GM18951 (cell line): ENCODE measurements at regions of chr12 and their contacts with region 1.

Region 1: DNA sequence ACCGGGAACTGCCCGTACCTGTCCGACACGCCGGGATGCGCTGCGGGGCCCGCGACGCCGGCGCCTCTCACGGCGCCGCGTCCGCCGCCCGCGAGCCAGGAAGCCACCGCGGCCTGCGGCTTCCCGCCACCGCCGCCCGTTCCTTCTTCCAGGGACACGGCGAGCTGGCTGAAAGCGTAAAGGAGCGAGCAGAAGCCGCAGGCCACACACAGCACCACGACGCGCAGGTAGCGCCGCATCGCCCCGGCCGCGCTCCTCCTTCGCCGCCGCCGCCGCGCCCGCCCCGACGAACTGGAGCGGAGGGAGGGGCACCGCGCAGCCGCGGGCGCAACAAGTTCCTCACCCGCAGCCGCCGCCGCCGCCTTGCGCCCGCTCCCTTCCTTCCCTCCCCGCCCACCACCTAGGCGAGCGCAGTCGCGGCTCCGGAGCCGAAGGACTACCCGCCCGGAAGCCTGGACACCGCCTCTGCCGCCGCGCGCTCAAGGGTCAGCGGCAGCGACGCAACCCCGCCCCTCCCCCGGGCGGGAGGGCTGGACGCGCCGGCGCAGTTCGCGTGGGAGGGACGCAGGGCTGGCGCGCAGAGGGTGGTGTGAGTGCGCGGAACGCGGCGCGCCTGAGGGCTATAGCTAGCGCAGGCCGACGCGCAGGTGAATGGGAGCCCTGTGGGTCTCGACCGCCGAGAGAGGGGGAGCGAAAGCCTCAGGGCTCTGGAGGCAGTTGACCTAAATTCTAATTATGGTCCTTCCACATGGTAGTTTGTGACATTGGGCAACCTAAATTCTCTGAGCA is at the start of gene GXYLT1:
- POLR2A ChIP-seq: peak; percentile 90

Region 2: GRCh38 chr12:41739066-41739465 is 405.5 kb before region 1 on chr12:
- in situ Hi-C with region 1: no loop called
- POLR2A ChIP-seq: no peak

Region 3: DNA sequence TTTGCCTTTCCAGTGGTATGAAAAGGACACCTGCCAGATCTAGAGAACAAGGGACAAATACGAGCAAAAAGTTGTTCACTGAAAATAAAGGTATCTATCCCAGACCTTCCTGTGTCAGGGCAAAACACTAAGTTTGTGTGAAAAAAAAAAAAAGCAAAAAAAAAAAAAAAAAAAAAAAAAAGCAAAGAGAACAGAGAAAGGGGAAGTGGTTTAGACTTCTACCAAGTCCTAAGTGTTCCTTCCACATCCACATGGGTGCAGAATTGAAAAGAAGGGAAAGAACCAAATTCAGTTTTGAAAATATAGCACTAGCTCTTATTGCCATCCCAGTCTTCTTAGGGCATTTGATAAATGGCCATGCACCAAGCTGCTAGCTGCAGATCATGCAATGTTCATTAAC is 139.6 kb after region 1 on chr12:
- in situ Hi-C with region 1: no loop called
- POLR2A ChIP-seq: no peak

Region 4: DNA sequence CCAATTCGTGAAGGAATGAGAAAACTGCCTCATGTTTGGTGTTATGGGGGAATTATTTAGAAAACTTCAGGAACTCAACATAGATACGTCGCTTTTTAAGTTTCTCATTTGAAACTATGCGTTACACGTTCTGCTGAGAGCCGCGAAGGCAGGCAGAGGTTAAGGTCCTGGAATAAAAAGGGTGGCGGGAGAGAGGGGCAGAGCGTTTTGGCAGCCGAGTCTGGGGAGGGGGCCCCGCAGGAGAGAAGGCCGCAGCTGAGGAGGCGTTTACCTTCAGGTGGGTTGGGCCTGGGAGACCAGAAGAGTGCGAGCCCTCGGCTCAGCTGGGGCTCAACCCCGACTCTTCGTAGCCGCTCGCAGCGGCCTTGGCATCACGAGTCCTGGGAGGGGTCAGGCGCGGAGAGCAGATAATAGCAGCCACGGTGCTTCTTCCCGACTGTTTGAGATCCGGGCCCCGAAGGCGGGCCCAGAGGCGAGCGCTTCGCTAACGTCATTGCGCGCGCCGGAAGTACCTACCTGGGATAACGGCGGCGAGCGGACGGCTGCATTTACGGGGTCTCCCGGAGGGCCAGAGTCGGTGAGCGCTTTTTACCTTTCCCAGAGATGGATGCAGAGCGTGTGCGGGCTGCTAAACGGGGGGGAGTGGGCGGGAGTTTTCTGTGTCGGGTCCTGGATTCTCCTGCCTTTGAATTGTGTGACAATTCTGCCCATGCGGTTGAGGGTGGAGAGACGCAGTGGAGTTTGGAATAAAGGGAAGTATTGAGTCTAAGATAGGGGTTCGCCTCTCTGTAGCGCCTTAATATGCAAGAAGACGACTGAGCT is 181.3 kb after region 1 on chr12 and contains the starts of genes PPHLN1 and ZCRB1:
- in situ Hi-C with region 1: loop called (anchors 10 kb)
- POLR2A ChIP-seq: peak; percentile 82